ENCODE measurements at regions of chr4 and their contacts with region 1.

Region 1: GRCh38 chr4:121998002-121998401 is 46.1 kb upstream of the TRPC3 start:
- DNase-seq: peak; percentile 48
- H3K4me3 ChIP-seq: no peak overlapping the region
- H3K27ac ChIP-seq: no peak overlapping the region
- H3K4me1 ChIP-seq: no peaks in the 10 kb centered on the region
- H3K27me3 ChIP-seq: no peaks in the 10 kb centered on the region
- CTCF ChIP-seq: peak; percentile 42; the same call in 1 of the 2 replicates

Region 2: GRCh38 chr4:121980643-121981042 is 17.4 kb before region 1 on chr4:
- CTCF ChIA-PET with region 1: no interaction called
- POLR2A ChIA-PET with region 1: interaction called, 12 read pairs
- intact Hi-C with region 1: no loop called
- DNase-seq: no peak
- H3K4me3 ChIP-seq: no peak overlapping the region
- H3K27ac ChIP-seq: no peak overlapping the region
- H3K4me1 ChIP-seq: no peaks in the 10 kb centered on the region
- H3K27me3 ChIP-seq: no peaks in the 10 kb centered on the region
- CTCF ChIP-seq: no peak